Activated CD4-positive, alpha-beta T cell treated with anti-CD3 and anti-CD28 coated beads, Interleukin-2, amount 10 ng/mL, durations not matched to agents 24 days and 14 days (primary cell): ENCODE measurements at regions of chr19 and their contacts with region 1.

Region 1: DNA sequence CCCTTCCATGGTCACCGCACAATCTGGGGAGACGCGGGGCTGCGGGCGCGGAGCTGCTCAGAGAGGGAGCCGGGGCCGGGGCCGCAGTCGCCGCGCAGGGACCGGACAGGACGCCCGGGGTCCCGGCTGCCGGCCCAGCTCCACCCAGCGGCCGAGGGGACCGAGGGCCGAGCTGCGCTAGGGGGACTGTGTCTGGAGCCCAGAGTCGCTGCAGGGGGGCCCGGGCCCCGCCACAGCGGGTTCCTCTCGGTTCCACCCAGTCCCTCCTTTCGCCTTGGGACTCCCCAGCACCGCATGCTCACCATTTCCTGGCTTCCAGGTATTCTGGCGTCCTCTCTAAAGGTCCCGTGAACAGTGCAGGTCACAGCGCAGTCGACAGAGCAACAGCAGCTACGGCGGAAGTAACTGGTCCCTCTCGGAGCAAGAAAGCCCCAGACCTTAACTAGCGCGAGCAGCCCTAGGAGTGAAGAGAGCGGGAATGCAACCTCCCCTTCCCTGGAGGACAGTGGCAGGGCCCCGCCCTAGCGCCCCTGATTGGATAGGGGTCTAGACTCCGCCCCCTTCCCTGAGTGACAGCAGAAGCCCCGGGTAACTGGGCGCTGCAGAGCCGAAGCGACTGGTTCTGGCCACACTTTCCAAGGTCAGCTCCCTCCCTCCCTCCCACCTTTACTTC is at the start of gene ZNF878:
- DNase-seq: peak; percentile 76
- H3K4me3 Mint-ChIP-seq: peak within 1 kb of the TSS; percentile 83
- H3K27ac Mint-ChIP-seq: peak within 1 kb of the TSS; percentile 62
- H3K4me1 Mint-ChIP-seq: peaks cover 5% of the 10 kb centered on the region
- H3K27me3 Mint-ChIP-seq: peaks cover 2% of the 10 kb centered on the region
- total RNA-seq, gene ZNF878: 0.21 and 0.49 TPM in 2 replicates

Region 2: GRCh38 chr19:11881151-11881800 is 171.4 kb before region 1 on chr19:
- intact Hi-C with region 1: loop called (anchors 5 kb)
- DNase-seq: peak; percentile 88
- H3K4me3 Mint-ChIP-seq: no peak overlapping the region
- H3K27ac Mint-ChIP-seq: no peak overlapping the region
- H3K4me1 Mint-ChIP-seq: peaks cover 2% of the 10 kb centered on the region
- H3K27me3 Mint-ChIP-seq: peaks cover 2% of the 10 kb centered on the region

Region 3: DNA sequence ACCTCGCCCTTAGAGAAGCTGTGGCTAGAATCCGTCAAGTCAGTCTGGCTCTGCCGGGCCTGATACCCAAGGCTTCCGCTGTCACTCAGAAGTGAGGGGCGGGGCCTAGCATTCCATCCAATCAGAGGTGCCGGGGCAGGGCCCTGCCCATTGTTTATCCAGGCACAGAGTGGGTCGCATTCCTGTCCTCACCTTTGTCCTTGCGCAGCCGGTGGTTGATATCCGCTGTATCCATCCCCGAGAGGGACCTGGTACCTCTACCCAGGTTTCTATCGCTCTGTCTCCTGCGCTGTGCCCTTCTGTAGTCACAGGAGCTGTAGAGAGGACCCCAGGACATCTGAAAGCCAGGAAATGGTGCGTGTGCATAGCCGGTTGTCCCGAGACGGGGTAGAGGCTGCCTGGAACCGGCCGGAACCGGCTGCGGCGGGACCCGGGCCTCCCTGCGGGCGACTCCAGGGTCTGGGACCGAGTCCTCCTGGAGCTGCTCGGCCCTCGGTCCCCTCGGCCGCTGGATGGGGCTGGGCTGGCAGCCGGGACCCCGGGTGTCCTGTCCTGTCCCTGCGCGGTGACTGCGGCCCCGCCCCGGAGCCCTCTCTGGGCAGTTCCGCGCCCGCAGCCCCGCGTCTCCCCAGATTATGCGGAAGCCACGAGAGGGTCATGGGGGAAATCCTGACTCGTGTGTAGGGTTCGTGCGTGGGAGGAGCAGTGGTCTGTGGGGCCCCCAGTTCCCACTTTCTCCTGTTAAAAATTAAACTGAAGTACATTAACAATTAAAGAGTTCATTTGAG is 87.6 kb before region 1 on chr19 and contains the start of gene ZNF763:
- intact Hi-C with region 1: loop called (anchors 5 kb)
- DNase-seq: peak; percentile 93
- H3K4me3 Mint-ChIP-seq: peak within 1 kb of the TSS; percentile 83
- H3K27ac Mint-ChIP-seq: peak within 1 kb of the TSS; percentile 78
- H3K4me1 Mint-ChIP-seq: peaks cover 16% of the 10 kb centered on the region
- H3K27me3 Mint-ChIP-seq: no peaks in the 10 kb centered on the region
- total RNA-seq, gene ZNF763: 0.31 and 0.51 TPM in 2 replicates